ENCODE measurements at regions of chr9 and their contacts with region 1.

Region 1: DNA sequence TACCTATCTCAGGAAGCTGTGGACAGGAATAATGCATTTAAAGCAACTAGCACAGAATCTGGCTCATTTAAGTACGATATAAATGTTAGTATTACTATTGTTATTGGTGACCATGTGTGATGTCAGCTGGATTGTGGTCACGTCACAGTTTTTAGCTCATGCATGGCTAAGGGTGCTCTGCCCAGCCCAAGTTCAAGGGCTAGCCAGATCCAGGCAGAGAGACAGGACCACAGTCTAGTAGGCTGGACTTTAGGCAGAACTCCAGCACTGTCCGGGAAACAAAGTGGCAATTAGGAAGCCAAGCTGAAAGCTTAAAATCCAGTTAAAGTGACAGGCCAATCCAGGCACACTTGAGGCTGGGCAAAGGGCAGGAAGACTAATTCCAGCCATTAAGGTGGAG is 273.6 kb downstream of the ADAMTSL1 start:
- DNase-seq: no peak
- H3K4me3 ChIP-seq: no peak overlapping the region
- H3K27ac ChIP-seq: peak overlapping the region; percentile 42
- H3K27me3 ChIP-seq: no peaks in the 10 kb centered on the region
- CTCF ChIP-seq: no peak

Region 2: GRCh38 chr9:18726546-18726945 is 21.0 kb before region 1 on chr9:
- CTCF ChIA-PET with region 1: interaction called, 5 read pairs
- POLR2A ChIA-PET with region 1: interaction called, 11 read pairs
- DNase-seq: peak; percentile 39
- H3K4me3 ChIP-seq: no peak overlapping the region
- H3K27ac ChIP-seq: peak overlapping the region; percentile 65
- H3K27me3 ChIP-seq: no peaks in the 10 kb centered on the region
- CTCF ChIP-seq: no peak

Region 3: GRCh38 chr9:18766989-18767550 is 19.5 kb after region 1 on chr9:
- CTCF ChIA-PET with region 1: no interaction called
- POLR2A ChIA-PET with region 1: no interaction called
- DNase-seq: no peak
- H3K4me3 ChIP-seq: no peak overlapping the region
- H3K27ac ChIP-seq: no peak overlapping the region
- H3K27me3 ChIP-seq: no peaks in the 10 kb centered on the region
- CTCF ChIP-seq: no peak

Region 4: DNA sequence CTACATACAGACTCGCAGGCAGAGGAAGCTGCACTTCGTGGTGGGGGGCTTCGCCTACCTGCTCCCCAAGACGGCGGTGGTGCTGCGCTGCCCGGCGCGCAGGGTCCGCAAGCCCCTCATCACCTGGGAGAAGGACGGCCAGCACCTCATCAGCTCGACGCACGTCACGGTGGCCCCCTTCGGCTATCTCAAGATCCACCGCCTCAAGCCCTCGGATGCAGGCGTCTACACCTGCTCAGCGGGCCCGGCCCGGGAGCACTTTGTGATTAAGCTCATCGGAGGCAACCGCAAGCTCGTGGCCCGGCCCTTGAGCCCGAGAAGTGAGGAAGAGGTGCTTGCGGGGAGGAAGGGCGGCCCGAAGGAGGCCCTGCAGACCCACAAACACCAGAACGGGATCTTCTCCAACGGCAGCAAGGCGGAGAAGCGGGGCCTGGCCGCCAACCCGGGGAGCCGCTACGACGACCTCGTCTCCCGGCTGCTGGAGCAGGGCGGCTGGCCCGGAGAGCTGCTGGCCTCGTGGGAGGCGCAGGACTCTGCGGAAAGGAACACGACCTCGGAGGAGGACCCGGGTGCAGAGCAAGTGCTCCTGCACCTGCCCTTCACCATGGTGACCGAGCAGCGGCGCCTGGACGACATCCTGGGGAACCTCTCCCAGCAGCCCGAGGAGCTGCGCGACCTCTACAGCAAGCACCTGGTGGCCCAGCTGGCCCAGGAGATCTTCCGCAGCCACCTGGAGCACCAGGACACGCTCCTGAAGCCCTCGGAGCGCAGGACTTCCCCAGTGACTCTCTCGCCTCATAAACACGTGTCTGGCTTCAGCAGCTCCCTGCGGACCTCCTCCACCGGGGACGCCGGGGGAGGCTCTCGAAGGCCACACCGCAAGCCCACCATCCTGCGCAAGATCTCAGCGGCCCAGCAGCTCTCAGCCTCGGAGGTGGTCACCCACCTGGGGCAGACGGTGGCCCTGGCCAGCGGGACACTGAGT is 29.5 kb after region 1 on chr9:
- CTCF ChIA-PET with region 1: no interaction called
- POLR2A ChIA-PET with region 1: no interaction called
- DNase-seq: no peak
- H3K4me3 ChIP-seq: no peak overlapping the region
- H3K27ac ChIP-seq: no peak overlapping the region
- H3K27me3 ChIP-seq: no peaks in the 10 kb centered on the region
- CTCF ChIP-seq: no peak

Measured in AG04450 (cell line).